ENCODE measurements at regions of chr1 and their contacts with region 1.

Region 1: GRCh38 chr1:185040408-185040735 is 5.0 kb upstream of the RNF2 start:
- DNase-seq: no peak
- H3K4me3 ChIP-seq: no peak overlapping the region
- H3K27me3 ChIP-seq: peaks cover 1% of the 10 kb centered on the region; the same call in 1 of the 2 replicates
- CTCF ChIP-seq: no peak

Region 2: GRCh38 chr1:185027252-185027882 is 13.0 kb before region 1 on chr1:
- CTCF ChIA-PET with region 1: interaction called, 10 read pairs
- POLR2A ChIA-PET with region 1: no interaction called
- DNase-seq: no peak
- H3K4me3 ChIP-seq: no peak overlapping the region
- H3K27me3 ChIP-seq: no peaks in the 10 kb centered on the region; the same call in 1 of the 2 replicates
- CTCF ChIP-seq: no peak

Region 3: DNA sequence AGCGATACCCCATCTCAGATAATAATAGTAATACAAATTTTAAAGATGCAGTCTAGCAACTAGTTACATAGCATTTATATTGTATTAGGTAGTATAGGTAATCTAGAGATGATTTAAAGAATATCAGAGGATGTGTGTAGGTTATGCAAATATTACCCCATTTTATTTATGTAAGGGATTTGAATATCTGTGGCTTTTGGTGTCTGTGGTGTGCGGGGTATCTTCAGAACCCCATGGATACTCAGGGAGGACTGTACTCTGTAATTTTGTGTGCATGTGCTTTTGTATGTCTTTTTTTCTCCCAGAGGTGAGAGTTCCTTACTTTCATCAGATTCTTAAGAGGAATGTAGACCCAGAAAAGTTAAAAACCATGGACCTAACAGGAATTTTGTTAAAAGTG is 17.7 kb after region 1 on chr1:
- CTCF ChIA-PET with region 1: no interaction called
- POLR2A ChIA-PET with region 1: no interaction called
- DNase-seq: no peak
- H3K4me3 ChIP-seq: no peak overlapping the region
- H3K27me3 ChIP-seq: no peaks in the 10 kb centered on the region
- CTCF ChIP-seq: no peak

Region 4: GRCh38 chr1:185068341-185068740 is 28.0 kb after region 1 on chr1:
- CTCF ChIA-PET with region 1: no interaction called
- POLR2A ChIA-PET with region 1: no interaction called
- DNase-seq: no peak
- H3K4me3 ChIP-seq: no peak overlapping the region
- H3K27me3 ChIP-seq: no peaks in the 10 kb centered on the region
- CTCF ChIP-seq: no peak

Region 5: DNA sequence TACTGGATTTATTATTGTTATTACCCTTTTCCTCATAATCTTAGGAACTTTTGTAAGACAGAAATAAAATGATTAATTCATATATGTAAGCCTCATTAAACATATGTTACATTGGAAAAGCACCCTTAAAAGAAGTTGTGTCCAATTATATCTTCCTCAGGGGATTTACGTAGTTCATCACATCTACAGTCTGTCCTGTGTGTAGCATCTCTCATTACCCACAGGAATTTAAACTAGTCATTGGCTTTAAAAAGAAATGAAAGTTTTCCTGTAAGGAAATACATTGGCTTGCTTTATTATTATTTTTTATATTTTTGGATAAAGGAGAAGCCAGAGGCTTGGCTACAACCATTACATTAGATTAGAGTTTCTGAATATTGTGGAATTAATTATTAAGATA is 172.7 kb after region 1 on chr1:
- CTCF ChIA-PET with region 1: no interaction called
- POLR2A ChIA-PET with region 1: no interaction called
- DNase-seq: no peak
- H3K4me3 ChIP-seq: no peak overlapping the region
- H3K27me3 ChIP-seq: no peaks in the 10 kb centered on the region
- CTCF ChIP-seq: no peak

Measured in BJ (cell line).